HCT116 (cell line): ENCODE measurements at regions of chr18 and their contacts with region 1.

Region 1: GRCh38 chr18:42053188-42053781 is 98.3 kb downstream of the PIK3C3 start:
- DNase-seq: peak; percentile 15
- ATAC-seq: peak; percentile 84
- H3K4me3 ChIP-seq: no peak overlapping the region
- H3K27ac ChIP-seq: no peak overlapping the region
- H3K4me1 ChIP-seq: no peaks in the 10 kb centered on the region
- H3K27me3 ChIP-seq: no peaks in the 10 kb centered on the region
- CTCF ChIP-seq: peak; percentile 29 to 93 (median 76); a peak in 5 of 6 replicates
- POLR2A ChIP-seq: no peak
- RAD21 ChIP-seq: peak; percentile 43

Region 2: DNA sequence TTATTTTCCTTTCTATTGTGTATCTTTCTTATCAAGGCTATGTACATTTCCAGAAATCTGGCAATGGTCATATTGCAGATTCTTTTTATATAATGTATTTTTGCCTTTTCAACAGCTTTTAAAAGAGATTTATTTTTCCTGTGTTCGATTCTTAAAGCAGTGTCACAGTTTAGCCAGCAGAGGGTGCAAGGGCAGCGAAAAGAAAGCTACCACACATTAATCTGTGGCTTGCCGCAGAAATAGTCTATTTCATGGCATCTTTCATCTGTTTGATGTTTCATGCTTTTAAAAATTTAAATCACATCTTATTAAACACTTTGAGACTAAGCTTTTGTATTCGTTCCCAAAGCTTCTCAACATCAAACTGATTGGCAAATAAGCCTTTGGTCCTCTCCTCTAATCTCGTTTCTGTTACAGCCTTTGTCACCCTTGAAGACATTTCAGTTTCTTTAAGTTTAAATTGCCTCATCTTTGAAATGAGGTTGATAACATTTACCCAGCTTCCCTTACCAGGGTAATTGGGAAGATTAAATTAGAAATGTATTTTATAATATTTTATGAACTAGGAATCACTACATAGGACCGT is 24.9 kb before region 1 on chr18:
- CTCF ChIA-PET with region 1: interaction called, 18 read pairs
- POLR2A ChIA-PET with region 1: no interaction called
- RAD21 ChIA-PET with region 1: no interaction called
- intact Hi-C with region 1: no loop called
- DNase-seq: no peak
- ATAC-seq: 0 out of 2 replicates have a peak, but pooled peaks have one; percentile 47
- H3K4me3 ChIP-seq: no peak overlapping the region
- H3K27ac ChIP-seq: no peak overlapping the region
- H3K4me1 ChIP-seq: no peaks in the 10 kb centered on the region
- H3K27me3 ChIP-seq: no peaks in the 10 kb centered on the region
- CTCF ChIP-seq: peak in 2 of 3 experiments; percentile 83 to 84; a peak in 4 of 6 replicates
- POLR2A ChIP-seq: no peak
- RAD21 ChIP-seq: no peak

Region 3: GRCh38 chr18:42114310-42114943 is 61.1 kb after region 1 on chr18:
- CTCF ChIA-PET with region 1: interaction called, 13 read pairs
- POLR2A ChIA-PET with region 1: no interaction called
- RAD21 ChIA-PET with region 1: no interaction called
- intact Hi-C with region 1: no loop called
- DNase-seq: peak; percentile 38
- ATAC-seq: peak; percentile 87
- H3K4me3 ChIP-seq: no peak overlapping the region
- H3K27ac ChIP-seq: no peak overlapping the region
- H3K4me1 ChIP-seq: 0 out of 4 replicates have a peak, but pooled peaks cover 0 to 3% of the 10 kb centered on the region in 2 experiments
- H3K27me3 ChIP-seq: no peaks in the 10 kb centered on the region
- CTCF ChIP-seq: peak; percentile 41 to 88 (median 69); a peak in 5 of 6 replicates
- POLR2A ChIP-seq: no peak
- RAD21 ChIP-seq: peak; percentile 74

Region 4: GRCh38 chr18:43271593-43272432 is 1218.5 kb after region 1 on chr18:
- CTCF ChIA-PET with region 1: interaction called, 4 read pairs
- POLR2A ChIA-PET with region 1: no interaction called
- RAD21 ChIA-PET with region 1: no interaction called
- intact Hi-C with region 1: loop called (anchors 5 kb)
- DNase-seq: peak; percentile 19
- ATAC-seq: no peak
- H3K4me3 ChIP-seq: no peak overlapping the region
- H3K27ac ChIP-seq: no peak overlapping the region
- H3K4me1 ChIP-seq: no peaks in the 10 kb centered on the region
- H3K27me3 ChIP-seq: no peaks in the 10 kb centered on the region
- CTCF ChIP-seq: peak in 2 of 3 experiments; percentile 52 to 54; a peak in 3 of 6 replicates
- POLR2A ChIP-seq: no peak
- RAD21 ChIP-seq: peak; percentile 30

Region 5: GRCh38 chr18:43596105-43596712 is 1542.9 kb after region 1 on chr18:
- CTCF ChIA-PET with region 1: no interaction called
- POLR2A ChIA-PET with region 1: no interaction called
- RAD21 ChIA-PET with region 1: no interaction called
- intact Hi-C with region 1: loop called (anchors 5 kb)
- DNase-seq: no peak
- ATAC-seq: no peak
- H3K4me3 ChIP-seq: no peak overlapping the region
- H3K27ac ChIP-seq: no peak overlapping the region
- H3K4me1 ChIP-seq: no peaks in the 10 kb centered on the region
- H3K27me3 ChIP-seq: no peaks in the 10 kb centered on the region
- CTCF ChIP-seq: peak in 2 of 3 experiments; percentile 9 to 45; a peak in 3 of 6 replicates
- POLR2A ChIP-seq: no peak
- RAD21 ChIP-seq: peak; percentile 36